ENCODE measurements at regions of chr2 and their contacts with region 1.

Region 1: GRCh38 chr2:204293884-204294747 is 251.2 kb upstream of the PARD3B start:
- DNase-seq: no peak
- H3K4me3 ChIP-seq: no peak overlapping the region
- H3K27ac ChIP-seq: no peak overlapping the region
- H3K4me1 ChIP-seq: no peaks in the 10 kb centered on the region
- H3K27me3 ChIP-seq: peaks cover 10% of the 10 kb centered on the region; the same call in 1 of the 2 replicates
- CTCF ChIP-seq: no peak

Region 2: GRCh38 chr2:204012072-204012653 is 282.0 kb before region 1 on chr2:
- CTCF ChIA-PET with region 1: no interaction called
- POLR2A ChIA-PET with region 1: no interaction called
- intact Hi-C with region 1: no loop called
- DNase-seq: peak; percentile 5 to 47
- H3K4me3 ChIP-seq: no peak overlapping the region
- H3K27ac ChIP-seq: no peak overlapping the region
- H3K4me1 ChIP-seq: no peaks in the 10 kb centered on the region
- H3K27me3 ChIP-seq: no peaks in the 10 kb centered on the region; the same call in 1 of the 2 replicates
- CTCF ChIP-seq: no peak

Region 3: GRCh38 chr2:204353823-204354222 is 59.7 kb after region 1 on chr2:
- CTCF ChIA-PET with region 1: no interaction called
- POLR2A ChIA-PET with region 1: no interaction called
- intact Hi-C with region 1: loop called (anchors 2 kb)
- DNase-seq: no peak
- H3K4me3 ChIP-seq: no peak overlapping the region
- H3K27ac ChIP-seq: no peak overlapping the region
- H3K4me1 ChIP-seq: no peaks in the 10 kb centered on the region
- H3K27me3 ChIP-seq: no peaks in the 10 kb centered on the region
- CTCF ChIP-seq: no peak

Region 4: GRCh38 chr2:204664708-204665121 is 370.6 kb after region 1 on chr2:
- CTCF ChIA-PET with region 1: no interaction called
- POLR2A ChIA-PET with region 1: no interaction called
- intact Hi-C with region 1: no loop called
- DNase-seq: peak in 1 of 2 experiments; percentile 79
- H3K4me3 ChIP-seq: no peak overlapping the region
- H3K27ac ChIP-seq: peak overlapping the region; percentile 90
- H3K4me1 ChIP-seq: peaks cover 26% of the 10 kb centered on the region
- H3K27me3 ChIP-seq: no peaks in the 10 kb centered on the region
- CTCF ChIP-seq: no peak

Measured in PC-9 (cell line).